Calu3 (cell line): ENCODE measurements at regions of chr6 and their contacts with region 1.

Region 1: GRCh38 chr6:165439928-165440554 is 130.6 kb upstream of the C6orf118 start:
- DNase-seq: no peak
- H3K4me3 Mint-ChIP-seq: no peak overlapping the region
- H3K27ac Mint-ChIP-seq: no peak overlapping the region
- H3K4me1 Mint-ChIP-seq: peaks cover 10% of the 10 kb centered on the region
- H3K27me3 Mint-ChIP-seq: no peaks in the 10 kb centered on the region
- CTCF ChIP-seq: no peak

Region 2: DNA sequence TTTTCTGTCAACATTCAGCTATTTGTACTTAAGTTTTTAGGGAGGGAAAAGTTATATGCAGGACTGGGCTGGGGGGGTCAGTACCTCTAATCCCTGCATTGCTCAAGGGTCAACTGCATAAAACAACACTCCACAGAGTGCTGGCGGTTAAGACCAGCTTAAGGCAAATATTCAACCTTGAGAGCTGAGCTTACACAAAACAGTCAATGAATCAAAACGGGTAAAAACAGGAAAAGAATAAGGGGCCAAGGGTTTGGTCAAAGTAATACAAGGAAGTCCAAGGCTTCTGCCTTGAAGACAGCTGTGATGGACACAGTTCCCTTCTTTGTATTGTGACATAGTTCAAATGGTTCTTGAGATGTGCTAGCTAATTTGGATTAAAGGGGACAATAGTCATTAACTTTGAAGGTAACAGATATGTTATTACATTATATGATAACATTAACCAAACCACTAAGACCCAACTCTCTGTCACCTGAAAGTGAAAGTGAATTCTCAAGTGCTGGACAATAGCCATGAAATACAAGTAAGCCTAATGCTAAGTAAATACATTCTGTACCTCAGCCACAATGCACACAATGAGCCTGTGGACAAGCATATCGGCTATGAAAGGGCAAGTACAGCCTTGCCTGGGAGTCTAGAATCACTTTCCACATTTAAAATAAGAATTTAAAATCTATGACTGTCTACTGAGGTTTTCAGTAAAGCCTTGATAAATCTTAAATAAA is 116.2 kb after region 1 on chr6:
- CTCF ChIA-PET with region 1: no interaction called
- intact Hi-C with region 1: loop called (anchors 2 kb)
- DNase-seq: peak; percentile 46
- H3K4me3 Mint-ChIP-seq: peak overlapping the region; percentile 54
- H3K27ac Mint-ChIP-seq: peak overlapping the region; percentile 42
- H3K4me1 Mint-ChIP-seq: peaks cover 47% of the 10 kb centered on the region
- H3K27me3 Mint-ChIP-seq: no peaks in the 10 kb centered on the region
- CTCF ChIP-seq: no peak

Region 3: DNA sequence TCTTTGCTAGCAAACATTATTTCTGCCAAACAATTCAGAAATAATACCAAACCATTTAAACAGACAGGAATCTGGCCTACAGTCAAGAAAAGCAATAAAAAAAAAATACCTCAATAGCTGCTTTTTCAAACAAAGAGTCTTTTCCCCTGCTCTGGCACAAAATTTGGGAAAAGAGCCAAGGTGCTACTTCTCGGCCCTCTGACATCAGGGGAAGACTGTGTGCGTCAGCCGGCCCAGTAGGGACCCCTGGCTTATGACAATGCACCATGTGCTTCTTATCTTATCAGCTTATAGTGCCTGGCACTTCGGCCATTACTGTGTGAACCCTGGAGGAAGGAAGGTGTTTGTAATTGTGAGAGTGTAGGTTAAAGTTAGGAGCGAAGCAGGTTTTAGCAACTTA is 133.6 kb after region 1 on chr6:
- CTCF ChIA-PET with region 1: interaction called, 7 read pairs
- intact Hi-C with region 1: loop called (anchors 5 kb)
- DNase-seq: peak; percentile 71
- H3K4me3 Mint-ChIP-seq: no peak overlapping the region
- H3K27ac Mint-ChIP-seq: no peak overlapping the region
- H3K4me1 Mint-ChIP-seq: peaks cover 41% of the 10 kb centered on the region
- H3K27me3 Mint-ChIP-seq: no peaks in the 10 kb centered on the region
- CTCF ChIP-seq: no peak

Region 4: DNA sequence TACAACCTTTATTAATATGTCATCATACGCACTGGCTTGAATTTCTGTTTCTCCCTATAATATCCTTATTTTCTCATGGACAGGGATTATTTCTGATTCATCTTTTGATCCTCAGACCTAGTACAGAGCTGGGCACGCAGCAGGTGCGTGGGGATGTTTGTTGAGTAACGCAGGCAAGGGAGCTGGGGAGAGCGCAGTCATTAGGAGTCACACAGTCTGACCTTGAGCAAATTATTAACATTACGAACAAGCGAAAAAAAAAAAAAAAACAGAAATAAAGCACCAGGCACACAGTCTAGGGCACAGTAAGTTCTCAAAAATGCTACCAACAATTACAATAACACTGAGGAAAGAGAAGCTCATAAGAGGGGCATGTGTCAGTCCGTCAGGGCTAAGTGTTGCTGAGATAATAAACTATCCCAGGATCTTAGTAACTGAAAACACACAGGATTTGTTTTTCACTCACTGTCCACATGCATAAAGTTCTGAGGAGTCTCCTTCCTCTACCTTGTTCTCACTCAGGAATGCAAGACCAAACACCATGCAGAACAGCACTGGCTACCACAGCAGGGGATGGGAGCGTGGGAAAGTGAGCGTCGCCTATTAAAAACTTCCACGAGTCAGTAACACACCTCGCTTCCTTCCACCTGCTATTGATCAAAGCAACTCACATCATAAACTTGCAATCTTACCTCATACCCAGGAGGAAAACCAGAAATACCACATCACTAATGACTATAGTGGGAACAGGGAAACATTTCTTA is 166.0 kb after region 1 on chr6:
- CTCF ChIA-PET with region 1: no interaction called
- intact Hi-C with region 1: loop called (anchors 1 kb)
- DNase-seq: peak; percentile 54
- H3K4me3 Mint-ChIP-seq: no peak overlapping the region
- H3K27ac Mint-ChIP-seq: no peak overlapping the region
- H3K4me1 Mint-ChIP-seq: peaks cover 16% of the 10 kb centered on the region
- H3K27me3 Mint-ChIP-seq: no peaks in the 10 kb centered on the region
- CTCF ChIP-seq: no peak

Region 5: GRCh38 chr6:165729307-165729936 is 289.4 kb after region 1 on chr6:
- CTCF ChIA-PET with region 1: interaction called, 7 read pairs
- intact Hi-C with region 1: loop called (anchors 5 kb)
- DNase-seq: peak; percentile 73
- H3K4me3 Mint-ChIP-seq: no peak overlapping the region
- H3K27ac Mint-ChIP-seq: no peak overlapping the region
- H3K4me1 Mint-ChIP-seq: no peaks in the 10 kb centered on the region
- H3K27me3 Mint-ChIP-seq: no peaks in the 10 kb centered on the region
- CTCF ChIP-seq: peak; percentile 83

Region 6: GRCh38 chr6:165850434-165851019 is 410.5 kb after region 1 on chr6:
- CTCF ChIA-PET with region 1: interaction called, 14 read pairs
- intact Hi-C with region 1: loop called (anchors 1 kb)
- DNase-seq: peak; percentile 77
- H3K4me3 Mint-ChIP-seq: no peak overlapping the region
- H3K27ac Mint-ChIP-seq: no peak overlapping the region
- H3K4me1 Mint-ChIP-seq: peaks cover 18% of the 10 kb centered on the region
- H3K27me3 Mint-ChIP-seq: peaks cover 17% of the 10 kb centered on the region
- CTCF ChIP-seq: peak; percentile 91